PC-9 (cell line): ENCODE measurements at regions of chrX and their contacts with region 1.

Region 1: DNA sequence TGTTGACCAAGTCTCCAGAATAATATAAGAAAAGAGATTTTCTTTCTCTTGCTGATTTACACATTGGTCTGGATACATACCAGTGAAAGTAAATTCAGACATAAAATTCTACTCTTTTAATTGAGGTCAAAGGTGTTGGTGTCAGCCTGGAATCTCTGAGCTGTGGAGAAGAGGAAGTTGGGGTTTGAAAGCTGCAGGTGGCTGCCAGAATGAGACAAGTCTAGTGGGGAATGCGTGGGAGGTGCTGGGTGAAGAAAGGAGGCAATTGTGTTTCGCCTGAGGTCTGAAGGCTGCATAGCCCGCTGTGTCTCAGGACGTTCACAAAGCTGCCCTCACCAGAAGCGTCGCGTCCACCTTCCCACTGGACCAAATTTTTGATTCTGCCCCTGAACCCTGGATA is 31.2 kb downstream of the PHEX start:
- DNase-seq: no peak
- H3K4me3 ChIP-seq: no peak overlapping the region
- H3K27ac ChIP-seq: 0 out of 2 replicates have a peak overlapping the region, but pooled peaks have one; percentile 16
- H3K4me1 ChIP-seq: peaks cover 43% of the 10 kb centered on the region
- H3K27me3 ChIP-seq: no peaks in the 10 kb centered on the region
- CTCF ChIP-seq: no peak

Region 2: GRCh38 chrX:21926527-21927278 is 136.6 kb before region 1 on chrX:
- CTCF ChIA-PET with region 1: no interaction called
- POLR2A ChIA-PET with region 1: no interaction called
- intact Hi-C with region 1: loop called (anchors 5 kb)
- DNase-seq: peak; percentile 24 to 94
- H3K4me3 ChIP-seq: no peak overlapping the region
- H3K27ac ChIP-seq: peak overlapping the region; percentile 82
- H3K4me1 ChIP-seq: peaks cover 17% of the 10 kb centered on the region
- H3K27me3 ChIP-seq: no peaks in the 10 kb centered on the region
- CTCF ChIP-seq: no peak

Region 3: GRCh38 chrX:22073918-22074317 is 10.6 kb after region 1 on chrX:
- CTCF ChIA-PET with region 1: no interaction called
- POLR2A ChIA-PET with region 1: no interaction called
- intact Hi-C with region 1: loop called (anchors 1 kb)
- DNase-seq: peak; percentile 65 to 95
- H3K4me3 ChIP-seq: no peak overlapping the region
- H3K27ac ChIP-seq: peak overlapping the region; percentile 73
- H3K4me1 ChIP-seq: peaks cover 19% of the 10 kb centered on the region
- H3K27me3 ChIP-seq: no peaks in the 10 kb centered on the region
- CTCF ChIP-seq: no peak

Region 4: DNA sequence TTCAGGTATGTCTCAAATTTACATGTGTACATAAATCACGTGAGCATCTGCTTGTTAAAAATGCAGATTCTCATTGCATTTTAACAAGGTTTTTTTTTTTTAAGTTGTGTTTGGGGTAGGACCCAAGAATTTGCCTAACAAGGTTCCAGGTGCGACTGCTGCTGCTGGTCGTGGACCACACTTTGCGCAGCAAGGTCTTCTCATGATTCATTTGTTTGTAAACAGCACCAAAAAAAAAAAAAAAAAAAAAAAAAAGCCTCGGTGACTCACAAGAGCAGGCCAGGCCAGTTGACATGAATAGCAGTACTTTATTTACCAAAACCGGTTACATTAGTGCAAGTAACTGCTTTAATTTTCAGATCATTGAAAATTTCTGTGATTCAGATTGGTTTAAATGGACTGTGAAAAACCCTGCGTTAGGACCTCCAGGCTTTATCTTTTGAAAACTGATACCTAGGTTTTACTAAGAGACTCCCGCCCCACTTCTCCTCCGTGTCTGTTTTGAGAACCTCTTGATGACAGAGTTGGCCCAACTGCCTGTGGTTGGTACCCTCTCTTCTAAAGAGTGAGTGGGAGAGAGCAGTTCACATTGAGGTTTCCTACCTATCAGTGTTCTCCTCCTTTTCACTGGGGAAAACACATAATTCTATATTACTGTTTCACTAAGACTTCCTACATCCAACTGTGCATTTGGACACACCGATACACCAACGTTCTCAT is 55.0 kb after region 1 on chrX:
- CTCF ChIA-PET with region 1: no interaction called
- POLR2A ChIA-PET with region 1: no interaction called
- intact Hi-C with region 1: loop called (anchors 2 kb)
- DNase-seq: peak; percentile 5 to 92
- H3K4me3 ChIP-seq: no peak overlapping the region; the same call in 1 of the 2 replicates
- H3K27ac ChIP-seq: peak overlapping the region; percentile 83
- H3K4me1 ChIP-seq: peaks cover 54% of the 10 kb centered on the region
- H3K27me3 ChIP-seq: no peaks in the 10 kb centered on the region
- CTCF ChIP-seq: no peak

Region 5: DNA sequence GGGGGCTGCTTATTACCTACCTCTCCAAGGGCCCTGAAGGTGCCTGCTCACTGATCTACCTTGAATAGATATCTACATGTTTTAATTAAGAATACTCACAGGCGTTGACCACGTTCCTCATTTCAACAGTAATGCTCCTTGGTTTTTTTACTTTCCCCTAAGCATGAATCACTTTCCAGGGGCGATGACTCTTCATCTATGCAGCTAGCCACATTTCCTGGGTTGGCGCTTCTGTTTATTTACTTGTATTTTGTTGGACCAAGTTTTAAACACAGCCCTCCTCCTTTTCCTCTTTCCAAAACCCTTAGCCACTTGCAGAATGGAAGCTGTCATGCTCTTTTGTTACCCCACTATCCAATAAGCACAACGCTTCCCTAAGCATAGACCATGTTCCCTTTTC is 260.3 kb after region 1 on chrX:
- CTCF ChIA-PET with region 1: no interaction called
- POLR2A ChIA-PET with region 1: no interaction called
- intact Hi-C with region 1: no loop called
- DNase-seq: peak; percentile 1 to 38
- H3K4me3 ChIP-seq: no peak overlapping the region
- H3K27ac ChIP-seq: peak overlapping the region; percentile 49; the same call in 1 of the 2 replicates
- H3K4me1 ChIP-seq: peaks cover 5% of the 10 kb centered on the region
- H3K27me3 ChIP-seq: no peaks in the 10 kb centered on the region
- CTCF ChIP-seq: no peak

Region 6: DNA sequence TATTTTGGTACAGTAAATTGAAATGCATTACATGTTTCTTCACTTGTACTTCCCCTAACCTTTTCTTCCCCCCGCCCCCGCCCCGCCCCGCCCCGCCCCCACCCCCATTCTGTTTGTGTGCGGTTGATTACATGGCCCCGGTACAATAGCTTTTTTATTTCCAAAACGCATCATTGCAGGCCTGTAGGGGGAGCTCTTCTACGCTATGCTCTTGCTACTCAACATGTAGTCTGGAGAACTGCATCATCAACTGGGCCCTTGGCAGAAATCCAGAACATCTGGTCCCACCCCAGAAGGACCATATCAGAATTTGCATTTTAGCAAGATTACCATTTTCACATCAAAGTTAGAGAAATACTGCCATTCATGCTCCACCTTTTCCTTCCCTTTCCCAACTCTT is 603.2 kb after region 1 on chrX:
- CTCF ChIA-PET with region 1: interaction called, 13 read pairs
- POLR2A ChIA-PET with region 1: no interaction called
- intact Hi-C with region 1: no loop called
- DNase-seq: no peak
- H3K4me3 ChIP-seq: no peak overlapping the region
- H3K27ac ChIP-seq: no peak overlapping the region
- H3K4me1 ChIP-seq: no peaks in the 10 kb centered on the region
- H3K27me3 ChIP-seq: no peaks in the 10 kb centered on the region
- CTCF ChIP-seq: no peak; the same call in 1 of the 2 replicates